Activated CD4-positive, alpha-beta T cell treated with anti-CD3 and anti-CD28 coated beads for 36 hours (primary cell): ENCODE measurements at regions of chr1 and their contacts with region 1.

Region 1: DNA sequence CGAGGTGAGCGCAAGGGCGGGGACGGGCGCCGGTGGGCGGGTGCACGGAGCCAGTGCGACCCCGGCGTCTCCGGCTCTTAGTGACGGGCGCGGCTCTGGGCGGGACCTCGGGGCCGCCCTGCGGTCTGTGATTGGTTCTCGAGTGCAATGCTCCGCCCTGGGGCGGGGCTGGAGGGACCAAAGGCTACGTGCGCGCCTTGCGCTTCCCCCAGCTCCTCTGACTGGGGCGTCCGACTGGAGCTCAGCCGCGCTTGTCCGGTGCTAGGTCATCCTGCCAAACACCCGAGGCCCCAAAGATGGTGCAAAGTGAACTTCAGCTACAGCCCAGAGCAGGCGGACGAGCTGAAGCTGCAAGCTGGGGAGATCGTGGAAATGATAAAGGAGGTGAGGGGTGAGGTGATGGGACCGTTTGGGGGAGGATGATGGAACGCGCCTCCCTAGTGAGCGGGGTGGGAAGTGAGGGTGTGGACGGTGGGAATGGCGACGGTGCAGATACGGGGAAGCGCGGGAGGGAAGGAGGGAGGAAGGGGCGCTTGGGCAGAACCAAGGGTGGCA is 811 bp downstream of the SH3D21 start:
- DNase-seq: peak; percentile 96
- ATAC-seq: peak; percentile 91
- H3K4me3 Mint-ChIP-seq: peak overlapping the region; percentile 98
- H3K27ac Mint-ChIP-seq: peak overlapping the region; percentile 96
- H3K4me1 Mint-ChIP-seq: peaks cover 45% of the 10 kb centered on the region
- H3K27me3 Mint-ChIP-seq: no peaks in the 10 kb centered on the region

Region 2: GRCh38 chr1:36248250-36248894 is 58.6 kb before region 1 on chr1:
- CTCF ChIA-PET with region 1: no interaction called
- POLR2A ChIA-PET with region 1: no interaction called
- intact Hi-C with region 1: no loop called
- DNase-seq: peak; percentile 15
- ATAC-seq: peak; percentile 33
- H3K4me3 Mint-ChIP-seq: no peak overlapping the region
- H3K27ac Mint-ChIP-seq: peak overlapping the region; percentile 60
- H3K4me1 Mint-ChIP-seq: peaks cover 54% of the 10 kb centered on the region
- H3K27me3 Mint-ChIP-seq: no peaks in the 10 kb centered on the region

Region 3: GRCh38 chr1:36323597-36324352 is 16.8 kb after region 1 on chr1 and contains the start of gene EVA1B:
- CTCF ChIA-PET with region 1: interaction called, 4 read pairs
- POLR2A ChIA-PET with region 1: interaction called, 3 read pairs
- intact Hi-C with region 1: loop called (anchors 1 to 2 kb)
- DNase-seq: peak; percentile 72
- ATAC-seq: peak; percentile 45
- H3K4me3 Mint-ChIP-seq: peak within 1 kb of the TSS; percentile 66
- H3K27ac Mint-ChIP-seq: no peak within 1 kb of the TSS
- H3K4me1 Mint-ChIP-seq: peaks cover 22% of the 10 kb centered on the region
- H3K27me3 Mint-ChIP-seq: peaks cover 3% of the 10 kb centered on the region
- total RNA-seq, gene EVA1B: 2.7 to 3.1 TPM